Colonic mucosa (tissue), 4 donors: ENCODE measurements at regions of chr4 and their contacts with region 1.

Region 1: GRCh38 chr4:114512595-114513295 is 85.9 kb upstream of the UGT8 start:
- DNase-seq: no peak
- H3K4me3 ChIP-seq: no peak overlapping the region
- H3K27ac ChIP-seq: no peak overlapping the region
- H3K4me1 ChIP-seq: no peaks in the 10 kb centered on the region
- H3K27me3 ChIP-seq: no peaks in the 10 kb centered on the region
- CTCF ChIP-seq: no peak

Region 2: DNA sequence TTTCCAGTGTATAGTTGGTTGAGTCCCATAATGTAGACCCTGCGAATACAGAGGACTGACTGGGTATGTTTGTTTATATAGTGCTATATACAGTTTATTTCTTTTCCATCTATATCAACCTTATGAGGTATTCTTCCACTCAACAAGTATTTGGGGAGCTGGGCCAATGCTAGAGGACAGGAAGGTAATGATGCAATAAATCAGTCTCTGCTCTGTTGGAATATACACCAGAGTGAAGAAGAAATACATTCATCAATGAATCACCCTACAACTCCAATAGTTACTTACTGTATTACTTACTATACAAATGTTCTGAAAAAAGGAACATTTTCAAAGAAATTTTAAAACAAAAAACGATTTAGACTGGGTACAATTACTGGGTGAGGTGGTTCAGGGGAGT is 531.2 kb before region 1 on chr4:
- intact Hi-C with region 1: no loop called
- DNase-seq: no peak
- H3K4me3 ChIP-seq: no peak overlapping the region
- H3K27ac ChIP-seq: no peak overlapping the region
- H3K4me1 ChIP-seq: no peaks in the 10 kb centered on the region
- H3K27me3 ChIP-seq: no peaks in the 10 kb centered on the region
- CTCF ChIP-seq: no peak

Region 3: GRCh38 chr4:114659386-114660008 is 146.8 kb after region 1 on chr4:
- intact Hi-C with region 1: loop called (anchors 5 kb)
- DNase-seq: peak; percentile 75
- H3K4me3 ChIP-seq: no peak overlapping the region
- H3K27ac ChIP-seq: no peak overlapping the region
- H3K4me1 ChIP-seq: no peaks in the 10 kb centered on the region
- H3K27me3 ChIP-seq: no peaks in the 10 kb centered on the region
- CTCF ChIP-seq: peak; percentile 85